ENCODE measurements at regions of chr9 and their contacts with region 1.

Region 1: GRCh38 chr9:15306757-15307534 is at the start of gene TTC39B:
- DNase-seq: peak; percentile 70
- ATAC-seq: peak; percentile 85
- H3K4me3 Mint-ChIP-seq: peak within 1 kb of the TSS; percentile 97
- H3K27ac Mint-ChIP-seq: peak within 1 kb of the TSS; percentile 85
- H3K4me1 Mint-ChIP-seq: peaks cover 29% of the 10 kb centered on the region
- H3K27me3 Mint-ChIP-seq: no peaks in the 10 kb centered on the region
- CTCF ChIP-seq: no peak
- total RNA-seq, gene TTC39B: 3.2 and 6.6 TPM in 2 replicates

Region 2: DNA sequence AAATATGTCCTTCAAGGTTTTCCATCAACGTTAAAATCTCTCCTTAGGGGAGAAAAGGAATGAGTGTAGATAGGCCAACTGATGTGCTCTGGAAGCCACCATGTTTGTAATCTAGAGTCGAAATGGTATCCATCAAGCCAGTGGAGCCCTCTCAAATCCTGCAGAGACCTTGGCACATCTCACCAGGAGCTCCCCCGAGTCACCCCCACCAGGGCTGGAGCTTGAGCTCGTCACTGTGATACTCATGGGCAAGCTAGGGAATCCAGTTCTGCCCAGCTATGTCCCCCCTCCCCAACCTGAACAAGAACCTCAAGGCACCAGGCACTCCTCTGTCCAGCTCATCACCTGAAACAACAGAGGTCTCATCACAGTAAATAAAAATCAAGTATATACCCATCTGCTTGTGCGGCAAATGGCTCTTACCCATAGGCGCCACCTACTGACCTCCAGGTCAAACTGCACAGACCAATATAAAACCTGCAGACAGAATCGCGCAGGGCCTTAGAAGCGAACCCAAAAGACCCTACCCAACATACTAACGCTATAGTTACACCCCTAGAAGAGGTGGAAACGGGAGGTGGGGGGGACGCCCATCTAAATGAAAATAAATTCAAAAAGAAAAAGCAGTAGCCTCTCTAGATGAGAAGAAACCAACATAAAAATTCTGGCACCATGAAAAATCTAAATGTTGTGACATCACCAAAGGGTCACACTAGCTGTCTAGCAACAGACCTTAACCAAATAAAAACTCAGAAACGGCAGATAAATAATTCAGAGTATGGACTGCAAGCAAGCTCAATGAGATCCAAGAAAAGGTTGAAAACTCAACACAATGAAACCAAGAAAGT is 74.9 kb before region 1 on chr9:
- CTCF ChIA-PET with region 1: no interaction called
- POLR2A ChIA-PET with region 1: no interaction called
- intact Hi-C with region 1: loop called (anchors 5 kb)
- DNase-seq: no peak
- ATAC-seq: peak; percentile 56
- H3K4me3 Mint-ChIP-seq: no peak overlapping the region
- H3K27ac Mint-ChIP-seq: no peak overlapping the region
- H3K4me1 Mint-ChIP-seq: peaks cover 19% of the 10 kb centered on the region
- H3K27me3 Mint-ChIP-seq: no peaks in the 10 kb centered on the region
- CTCF ChIP-seq: no peak

Region 3: GRCh38 chr9:15295761-15296405 is 11.1 kb before region 1 on chr9:
- CTCF ChIA-PET with region 1: no interaction called
- POLR2A ChIA-PET with region 1: interaction called, 5 read pairs
- intact Hi-C with region 1: loop called (anchors 1 kb)
- DNase-seq: no peak
- ATAC-seq: peak; percentile 32
- H3K4me3 Mint-ChIP-seq: peak overlapping the region; percentile 77
- H3K27ac Mint-ChIP-seq: peak overlapping the region; percentile 89
- H3K4me1 Mint-ChIP-seq: peaks cover 53% of the 10 kb centered on the region
- H3K27me3 Mint-ChIP-seq: no peaks in the 10 kb centered on the region
- CTCF ChIP-seq: no peak

Region 4: GRCh38 chr9:15510789-15511575 is 204.0 kb after region 1 on chr9 and contains the start of gene PSIP1:
- CTCF ChIA-PET with region 1: no interaction called
- POLR2A ChIA-PET with region 1: interaction called, 8 read pairs
- intact Hi-C with region 1: loop called (anchors 1 kb)
- DNase-seq: peak; percentile 85
- ATAC-seq: peak; percentile 78
- H3K4me3 Mint-ChIP-seq: peak within 1 kb of the TSS; percentile 97
- H3K27ac Mint-ChIP-seq: peak within 1 kb of the TSS; percentile 100
- H3K4me1 Mint-ChIP-seq: peaks cover 56% of the 10 kb centered on the region
- H3K27me3 Mint-ChIP-seq: no peaks in the 10 kb centered on the region
- CTCF ChIP-seq: no peak
- total RNA-seq, gene PSIP1: 56.8 and 57.2 TPM in 2 replicates

Region 5: GRCh38 chr9:15572200-15572770 is 265.3 kb after region 1 on chr9:
- CTCF ChIA-PET with region 1: no interaction called
- POLR2A ChIA-PET with region 1: no interaction called
- intact Hi-C with region 1: no loop called
- DNase-seq: no peak
- ATAC-seq: no peak
- H3K4me3 Mint-ChIP-seq: no peak overlapping the region
- H3K27ac Mint-ChIP-seq: no peak overlapping the region
- H3K4me1 Mint-ChIP-seq: no peaks in the 10 kb centered on the region
- H3K27me3 Mint-ChIP-seq: no peaks in the 10 kb centered on the region
- CTCF ChIP-seq: no peak